AG04449 (cell line): ENCODE measurements at regions of chr15 and their contacts with region 1.

Region 1: DNA sequence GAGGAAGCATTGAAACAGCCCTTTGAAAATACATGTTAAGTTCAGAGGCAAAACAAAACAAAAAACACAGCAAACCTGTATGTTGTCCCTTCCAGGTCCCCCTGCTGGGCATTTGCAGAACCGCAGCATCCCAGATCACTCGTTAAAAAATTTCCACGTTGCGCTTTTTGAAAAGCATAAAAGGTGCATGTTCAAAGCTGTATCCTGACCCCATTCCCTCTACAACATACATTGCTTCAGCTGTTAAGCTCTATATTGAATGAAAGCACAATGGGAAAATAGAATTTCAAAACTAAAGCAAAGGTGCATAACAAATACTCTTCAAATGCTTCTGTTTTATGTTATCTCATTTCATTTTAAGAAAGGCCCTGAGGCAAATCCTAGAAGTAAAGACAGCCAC is 328.3 kb downstream of the THSD4 start:
- DNase-seq: no peak
- H3K4me3 ChIP-seq: no peak overlapping the region
- CTCF ChIP-seq: peak; percentile 70

Region 2: GRCh38 chr15:71003319-71003718 is 440.2 kb before region 1 on chr15:
- CTCF ChIA-PET with region 1: interaction called, 13 read pairs
- POLR2A ChIA-PET with region 1: no interaction called
- DNase-seq: peak; percentile 19
- H3K4me3 ChIP-seq: no peak overlapping the region
- CTCF ChIP-seq: no peak

Region 3: GRCh38 chr15:71103102-71103676 is 340.3 kb before region 1 on chr15:
- CTCF ChIA-PET with region 1: interaction called, 197 read pairs
- POLR2A ChIA-PET with region 1: no interaction called
- DNase-seq: no peak
- H3K4me3 ChIP-seq: no peak overlapping the region
- CTCF ChIP-seq: peak; percentile 64

Region 4: GRCh38 chr15:71120425-71120944 is 323.1 kb before region 1 on chr15:
- CTCF ChIA-PET with region 1: interaction called, 197 read pairs
- POLR2A ChIA-PET with region 1: no interaction called
- DNase-seq: no peak
- H3K4me3 ChIP-seq: no peak overlapping the region
- CTCF ChIP-seq: no peak

Region 5: GRCh38 chr15:71455107-71455506 is 11.6 kb after region 1 on chr15:
- CTCF ChIA-PET with region 1: interaction called, 14 read pairs
- POLR2A ChIA-PET with region 1: no interaction called
- DNase-seq: no peak
- H3K4me3 ChIP-seq: no peak overlapping the region
- CTCF ChIP-seq: no peak

Region 6: DNA sequence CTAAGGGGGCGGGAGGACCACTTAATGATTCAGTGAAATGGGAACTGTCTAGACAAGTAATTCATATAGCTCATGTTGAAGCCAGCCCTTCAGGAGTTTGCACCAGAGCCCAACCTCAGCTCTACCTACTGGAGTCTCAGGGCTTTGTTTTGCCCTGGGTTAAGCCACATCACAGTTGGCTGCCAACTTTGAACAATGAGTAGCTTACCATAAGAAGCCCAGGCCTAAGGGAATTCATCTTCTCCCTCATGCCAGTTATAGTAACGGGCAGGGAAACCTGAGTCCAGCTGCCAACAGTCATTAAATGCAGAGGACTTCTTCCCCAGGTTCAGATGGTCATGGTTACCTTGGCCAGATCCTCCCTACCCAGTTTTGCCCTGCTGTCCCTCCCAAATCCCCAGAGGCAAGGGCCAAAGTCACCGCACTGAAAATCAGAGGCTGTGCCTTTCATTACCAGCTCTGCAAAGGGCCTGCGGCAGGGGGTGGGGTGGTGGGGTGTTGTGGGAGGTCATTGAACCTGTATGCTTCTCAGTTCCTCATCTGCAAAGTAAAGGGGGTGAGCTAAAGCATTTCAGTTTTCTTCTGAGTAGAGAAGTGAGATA is 64.6 kb after region 1 on chr15:
- CTCF ChIA-PET with region 1: no interaction called
- POLR2A ChIA-PET with region 1: no interaction called
- DNase-seq: no peak
- H3K4me3 ChIP-seq: no peak overlapping the region
- CTCF ChIP-seq: no peak

Region 7: DNA sequence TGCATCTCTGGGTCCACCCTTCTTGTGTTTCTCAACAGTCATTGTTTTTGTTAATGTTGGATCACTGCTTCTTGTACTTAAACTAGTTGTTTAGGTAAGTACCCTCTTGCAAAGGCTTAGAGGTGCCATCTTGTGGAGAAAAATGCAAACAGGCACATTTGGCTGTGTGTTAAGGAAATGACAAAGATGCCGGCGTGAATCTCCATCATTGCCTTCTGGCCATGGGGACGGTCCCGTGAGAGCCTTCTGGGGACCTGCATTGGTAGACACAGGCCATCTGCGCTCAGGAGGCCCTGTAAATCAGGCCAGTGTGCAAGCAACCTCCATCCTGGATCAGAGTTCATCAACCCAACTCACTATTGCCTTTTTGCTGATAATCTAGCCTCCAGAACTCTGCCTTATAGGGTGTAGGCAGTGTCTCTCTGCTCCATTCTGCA is 208.2 kb after region 1 on chr15:
- CTCF ChIA-PET with region 1: interaction called, 38 read pairs
- POLR2A ChIA-PET with region 1: no interaction called
- DNase-seq: peak; percentile 69
- H3K4me3 ChIP-seq: no peak overlapping the region
- CTCF ChIP-seq: peak; percentile 63